ENCODE measurements at regions of chr7 and their contacts with region 1.

Region 1: DNA sequence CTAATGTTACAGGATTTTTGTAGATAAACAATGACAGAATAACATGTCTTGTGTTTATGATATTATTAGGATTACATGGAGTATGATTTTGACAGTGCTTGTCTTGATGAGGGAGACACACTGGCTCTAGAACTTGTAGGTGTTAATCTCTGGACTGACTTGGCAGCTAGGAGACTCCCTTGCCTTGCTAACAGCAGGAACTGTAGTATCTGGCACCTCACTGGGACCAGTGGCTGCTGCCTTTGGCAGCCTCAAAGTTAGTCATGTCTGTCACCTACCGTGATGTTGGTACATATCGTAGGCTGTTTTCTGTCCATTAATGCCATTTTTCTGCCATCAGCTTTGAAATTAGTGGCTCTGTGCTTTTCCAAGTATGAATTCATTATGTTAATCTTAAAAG is 261.5 kb downstream of the CDK14 start:
- DNase-seq: peak in 1 of 2 donors; percentile 21
- ATAC-seq: peak in 7 of 8 donors; percentile 34 to 84 (median 59)
- H3K4me3 ChIP-seq: no peak overlapping the region
- H3K27ac ChIP-seq: no peak overlapping the region
- H3K4me1 ChIP-seq: peaks cover 0 to 6% (median 0%) of the 10 kb centered on the region in 9 donors
- H3K27me3 ChIP-seq: no peaks in the 10 kb centered on the region
- CTCF ChIP-seq: peak in 4 of 9 donors; percentile 16 to 46 (median 38)

Region 2: GRCh38 chr7:90843472-90843871 is 14.1 kb before region 1 on chr7:
- intact Hi-C with region 1: loop called in 1 of 10 experiments (anchors 1 kb)
- DNase-seq: no peak
- ATAC-seq: no peak
- H3K4me3 ChIP-seq: no peak overlapping the region
- H3K27ac ChIP-seq: no peak overlapping the region
- H3K4me1 ChIP-seq: peaks cover 0 to 20% (median 4%) of the 10 kb centered on the region in 9 donors
- H3K27me3 ChIP-seq: no peaks in the 10 kb centered on the region
- CTCF ChIP-seq: no peak

Measured in heart right ventricle (tissue), 16 donors.